CD4-positive, alpha-beta memory T cell (primary cell): ENCODE measurements at regions of chr10 and their contacts with region 1.

Region 1: DNA sequence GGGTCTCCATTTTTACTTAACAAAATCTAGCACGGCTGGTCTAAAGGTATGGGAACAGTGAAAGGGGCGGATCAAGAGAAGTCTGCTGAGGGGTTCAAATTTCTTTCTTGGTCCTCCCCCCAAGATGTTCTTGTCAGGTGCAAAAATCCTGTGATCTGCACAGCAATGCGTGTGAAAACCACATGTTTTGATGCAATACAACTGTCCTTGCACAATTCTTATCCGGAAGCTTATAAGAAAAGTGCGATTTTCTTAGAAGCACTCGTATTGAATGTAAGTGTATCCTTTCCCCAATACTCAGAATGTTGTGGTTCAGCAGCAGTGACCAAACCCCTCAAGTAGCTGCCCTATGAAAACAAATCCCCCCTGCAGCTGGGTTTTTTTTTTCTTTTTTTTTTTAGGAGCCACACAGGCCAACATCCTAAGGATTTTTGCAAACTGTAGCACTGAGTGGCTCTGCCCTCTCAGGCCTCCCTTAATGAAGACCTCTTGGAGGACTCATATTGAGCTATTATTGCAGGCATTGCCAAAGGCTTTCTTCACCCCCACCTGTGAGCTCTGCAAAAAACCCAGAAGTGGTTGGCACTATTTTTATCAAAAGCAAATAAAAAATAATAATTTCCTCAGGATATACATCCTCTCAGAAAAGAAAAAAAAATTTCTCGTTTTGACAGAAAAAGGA is 151.9 kb upstream of the ITGB1 start:
- DNase-seq: peak; percentile 52 to 59 (median 53)
- H3K4me3 ChIP-seq: peak overlapping the region in 1 of 2 donors; percentile 25
- H3K4me3 Mint-ChIP-seq: peak overlapping the region; percentile 60 to 86 (median 77)
- H3K27ac ChIP-seq: peak overlapping the region; percentile 57
- H3K27ac Mint-ChIP-seq: peak overlapping the region; percentile 91 to 98 (median 98)
- H3K4me1 ChIP-seq: peaks cover 98% of the 10 kb centered on the region
- H3K4me1 Mint-ChIP-seq: peaks cover 67 to 99% (median 83%) of the 10 kb centered on the region in 4 donors
- H3K27me3 ChIP-seq: no peaks in the 10 kb centered on the region
- H3K27me3 Mint-ChIP-seq: no peaks in the 10 kb centered on the region

Region 2: GRCh38 chr10:32980558-32981468 is 129.1 kb before region 1 on chr10:
- CTCF ChIA-PET with region 1: interaction called, 4 read pairs
- POLR2A ChIA-PET with region 1: interaction called, 46 read pairs
- intact Hi-C with region 1: no loop called
- DNase-seq: peak; percentile 77 to 94 (median 80)
- H3K4me3 ChIP-seq: peak overlapping the region; percentile 30 to 87
- H3K4me3 Mint-ChIP-seq: peak overlapping the region; percentile 93 to 98 (median 95)
- H3K27ac ChIP-seq: peak overlapping the region; percentile 84
- H3K27ac Mint-ChIP-seq: peak overlapping the region; percentile 92 to 99 (median 98)
- H3K4me1 ChIP-seq: peaks cover 40% of the 10 kb centered on the region
- H3K4me1 Mint-ChIP-seq: peaks cover 25 to 39% (median 34%) of the 10 kb centered on the region in 4 donors
- H3K27me3 ChIP-seq: no peaks in the 10 kb centered on the region
- H3K27me3 Mint-ChIP-seq: no peaks in the 10 kb centered on the region

Region 3: GRCh38 chr10:33025039-33025438 is 84.9 kb before region 1 on chr10:
- CTCF ChIA-PET with region 1: no interaction called
- POLR2A ChIA-PET with region 1: interaction called, 80 read pairs
- intact Hi-C with region 1: loop called (anchors 1 kb)
- DNase-seq: no peak
- H3K4me3 ChIP-seq: no peak overlapping the region
- H3K4me3 Mint-ChIP-seq: peak overlapping the region in 4 of 8 donors; percentile 3 to 67 (median 10)
- H3K27ac ChIP-seq: no peak overlapping the region
- H3K27ac Mint-ChIP-seq: peak overlapping the region in 6 of 7 donors; percentile 13 to 85 (median 65)
- H3K4me1 ChIP-seq: peaks cover 63% of the 10 kb centered on the region
- H3K4me1 Mint-ChIP-seq: peaks cover 47 to 73% (median 55%) of the 10 kb centered on the region in 4 donors
- H3K27me3 ChIP-seq: no peaks in the 10 kb centered on the region
- H3K27me3 Mint-ChIP-seq: no peaks in the 10 kb centered on the region

Region 4: GRCh38 chr10:33087152-33087551 is 22.8 kb before region 1 on chr10:
- CTCF ChIA-PET with region 1: interaction called, 4 read pairs
- POLR2A ChIA-PET with region 1: interaction called, 29 read pairs
- intact Hi-C with region 1: loop called (anchors 2 kb)
- DNase-seq: peak in 4 of 5 donors; percentile 24 to 46 (median 38)
- H3K4me3 ChIP-seq: no peak overlapping the region
- H3K4me3 Mint-ChIP-seq: peak overlapping the region in 7 of 8 donors; percentile 14 to 77 (median 65)
- H3K27ac ChIP-seq: peak overlapping the region; percentile 36
- H3K27ac Mint-ChIP-seq: peak overlapping the region; percentile 78 to 94 (median 87)
- H3K4me1 ChIP-seq: peaks cover 52% of the 10 kb centered on the region
- H3K4me1 Mint-ChIP-seq: peaks cover 42 to 81% (median 64%) of the 10 kb centered on the region in 4 donors
- H3K27me3 ChIP-seq: no peaks in the 10 kb centered on the region
- H3K27me3 Mint-ChIP-seq: peaks cover 0 to 1% of the 10 kb centered on the region in 2 donors

Region 5: DNA sequence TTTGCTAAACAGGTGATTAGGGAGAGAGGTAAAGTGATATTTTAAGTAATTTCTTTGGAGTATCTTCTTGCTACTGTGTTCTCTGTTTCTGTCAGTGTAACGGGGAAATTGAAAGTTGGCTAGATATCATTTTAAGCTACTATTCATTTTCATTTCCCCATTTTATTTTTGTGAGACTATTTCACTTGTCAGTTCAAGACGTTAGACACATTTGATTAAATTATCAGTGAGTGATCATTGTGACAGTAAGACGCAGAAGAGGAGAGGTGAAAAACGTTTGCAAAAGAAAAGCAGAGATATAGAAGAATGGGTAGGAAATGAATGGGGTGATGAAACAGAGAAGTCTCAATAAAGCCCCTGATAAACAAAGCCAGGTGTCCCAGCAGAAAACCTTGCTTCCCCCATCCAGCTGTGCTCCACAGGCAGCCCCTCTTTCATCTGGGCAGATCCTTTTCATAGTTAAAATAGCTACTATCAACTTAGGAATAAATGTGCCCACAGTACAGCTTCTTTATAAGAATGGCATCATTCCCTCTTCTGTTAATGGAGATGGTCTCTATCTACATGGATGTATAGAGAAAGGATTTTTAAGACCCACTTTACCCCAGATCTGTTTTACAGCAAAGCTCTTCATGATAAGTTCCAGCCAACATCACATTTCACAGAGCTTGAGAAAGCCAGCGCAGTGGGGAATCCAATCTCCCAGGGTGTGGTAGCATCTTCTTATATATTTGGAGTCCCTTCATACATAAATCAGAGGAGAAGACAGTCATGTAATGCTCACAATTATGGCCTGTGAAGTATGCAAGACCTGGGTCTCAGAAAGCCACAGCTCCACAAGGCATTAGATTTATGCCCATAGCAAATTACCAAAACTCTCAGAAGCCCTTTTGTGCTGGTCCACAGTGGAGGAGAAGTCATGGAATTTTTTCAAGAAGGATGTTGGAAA is 13.8 kb before region 1 on chr10:
- CTCF ChIA-PET with region 1: interaction called, 36 read pairs
- POLR2A ChIA-PET with region 1: interaction called, 194 read pairs
- intact Hi-C with region 1: loop called (anchors 1 kb)
- DNase-seq: no peak
- H3K4me3 ChIP-seq: no peak overlapping the region
- H3K4me3 Mint-ChIP-seq: peak overlapping the region in 4 of 8 donors; percentile 7 to 49 (median 23)
- H3K27ac ChIP-seq: no peak overlapping the region
- H3K27ac Mint-ChIP-seq: peak overlapping the region in 4 of 7 donors; percentile 12 to 50 (median 27)
- H3K4me1 ChIP-seq: peaks cover 48% of the 10 kb centered on the region
- H3K4me1 Mint-ChIP-seq: peaks cover 48 to 80% (median 67%) of the 10 kb centered on the region in 4 donors
- H3K27me3 ChIP-seq: no peaks in the 10 kb centered on the region
- H3K27me3 Mint-ChIP-seq: no peaks in the 10 kb centered on the region